ENCODE measurements at regions of chr3 and their contacts with region 1.

Region 1: GRCh38 chr3:175606650-175607318 is 747.6 kb downstream of the NAALADL2 start:
- DNase-seq: no peak
- H3K4me3 ChIP-seq: no peak overlapping the region
- H3K27ac ChIP-seq: no peak overlapping the region
- H3K4me1 ChIP-seq: peaks cover 19% of the 10 kb centered on the region
- H3K27me3 ChIP-seq: no peaks in the 10 kb centered on the region
- CTCF ChIP-seq: no peak

Region 2: GRCh38 chr3:174147798-174148197 is 1459.0 kb before region 1 on chr3:
- CTCF ChIA-PET with region 1: no interaction called
- POLR2A ChIA-PET with region 1: no interaction called
- intact Hi-C with region 1: loop called (anchors 5 kb)
- DNase-seq: no peak
- H3K4me3 ChIP-seq: no peak overlapping the region
- H3K27ac ChIP-seq: peak overlapping the region; percentile 44
- H3K4me1 ChIP-seq: no peaks in the 10 kb centered on the region
- H3K27me3 ChIP-seq: no peaks in the 10 kb centered on the region
- CTCF ChIP-seq: no peak